Heart left ventricle (tissue), 16 donors: ENCODE measurements at regions of chr19 and their contacts with region 1.

Region 1: DNA sequence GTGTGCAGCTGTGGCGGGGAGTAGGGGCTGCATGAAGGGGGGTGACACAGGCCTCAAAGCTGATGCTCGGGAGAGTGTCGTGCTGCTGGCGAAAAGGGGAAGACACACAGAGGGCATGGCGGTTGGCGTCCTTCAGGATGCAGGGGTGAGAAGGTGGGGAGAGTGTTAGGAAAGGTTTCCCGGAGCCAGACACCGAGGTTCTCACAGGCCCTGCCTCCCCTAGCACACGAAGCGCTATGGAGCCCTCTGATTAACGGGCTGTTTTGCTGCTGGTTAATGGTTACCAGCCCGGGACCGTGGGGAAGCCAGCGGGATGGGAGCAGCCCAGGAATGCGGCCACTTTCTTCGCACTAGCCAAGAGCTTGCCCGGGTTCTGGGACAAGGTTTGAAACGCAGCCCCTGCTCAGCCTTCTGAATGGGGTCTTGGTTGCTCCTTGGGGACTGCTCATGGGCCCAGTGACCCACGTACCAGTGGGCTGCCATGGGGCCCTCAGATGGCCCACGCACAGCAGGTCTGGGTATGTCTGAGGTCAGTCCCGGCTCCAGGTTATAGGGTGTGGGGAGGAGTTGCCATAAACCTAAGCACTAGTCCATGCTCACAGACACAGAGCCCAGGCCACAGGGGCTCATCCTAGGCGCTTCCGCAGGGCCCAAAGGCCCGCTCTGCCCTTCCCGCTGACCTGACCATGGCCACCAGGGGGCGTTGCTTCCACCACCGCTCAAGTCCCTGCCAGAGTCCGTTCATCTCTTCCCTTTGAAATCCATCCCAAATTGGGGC is 31.3 kb upstream of the ISYNA1 start:
- DNase-seq: peak; percentile 58 to 85 (median 67)
- ATAC-seq: peak; percentile 5 to 42 (median 24)
- H3K4me3 ChIP-seq: no peak overlapping the region
- H3K27ac ChIP-seq: peak overlapping the region in 2 of 12 donors; percentile 13 to 43
- H3K4me1 ChIP-seq: peaks cover 13 to 72% (median 61%) of the 10 kb centered on the region in 12 donors
- H3K27me3 ChIP-seq: no peaks in the 10 kb centered on the region
- CTCF ChIP-seq: peak; percentile 61 to 86 (median 77)
- POLR2A ChIP-seq: no peak

Region 2: GRCh38 chr19:18340190-18340989 is 128.9 kb before region 1 on chr19 and contains the start of gene PGPEP1:
- intact Hi-C with region 1: no loop called
- DNase-seq: peak; percentile 65 to 89 (median 88)
- ATAC-seq: peak in 3 of 4 donors; percentile 65 to 90 (median 88)
- H3K4me3 ChIP-seq: peak within 1 kb of the TSS; percentile 69 to 99 (median 95)
- H3K27ac ChIP-seq: peak within 1 kb of the TSS; percentile 61 to 92 (median 86)
- H3K4me1 ChIP-seq: peaks cover 0 to 36% (median 12%) of the 10 kb centered on the region in 12 donors
- H3K27me3 ChIP-seq: no peaks in the 10 kb centered on the region
- CTCF ChIP-seq: no peak
- POLR2A ChIP-seq: peak in 1 of 2 donors; percentile 48
- total RNA-seq, gene PGPEP1: 22.5 to 58.6 (median 44.6) TPM

Region 3: GRCh38 chr19:18408053-18408476 is 61.2 kb before region 1 on chr19:
- intact Hi-C with region 1: no loop called
- DNase-seq: peak in 2 of 5 donors; percentile 41 to 44
- ATAC-seq: peak in 2 of 4 donors; percentile 22 to 30
- H3K4me3 ChIP-seq: no peak overlapping the region
- H3K27ac ChIP-seq: no peak overlapping the region
- H3K4me1 ChIP-seq: peaks cover 0 to 4% (median 0%) of the 10 kb centered on the region in 12 donors
- H3K27me3 ChIP-seq: no peaks in the 10 kb centered on the region
- CTCF ChIP-seq: peak; percentile 16 to 51 (median 40)
- POLR2A ChIP-seq: no peak

Region 4: GRCh38 chr19:18503971-18504885 is 35.0 kb after region 1 on chr19:
- intact Hi-C with region 1: loop called in 8 of 10 experiments (anchors 2 to 5 kb)
- DNase-seq: no peak
- ATAC-seq: no peak
- H3K4me3 ChIP-seq: no peak overlapping the region
- H3K27ac ChIP-seq: peak overlapping the region in 10 of 12 donors; percentile 43 to 93 (median 78)
- H3K4me1 ChIP-seq: peaks cover 63 to 100% (median 98%) of the 10 kb centered on the region in 12 donors
- H3K27me3 ChIP-seq: no peaks in the 10 kb centered on the region
- CTCF ChIP-seq: no peak
- POLR2A ChIP-seq: no peak

Region 5: GRCh38 chr19:18521885-18522624 is 52.8 kb after region 1 on chr19 and contains the start of gene ELL:
- intact Hi-C with region 1: loop called in 5 of 10 experiments (anchors 5 kb)
- DNase-seq: peak; percentile 100
- ATAC-seq: peak; percentile 92 to 96 (median 95)
- H3K4me3 ChIP-seq: peak within 1 kb of the TSS; percentile 77 to 100 (median 96)
- H3K27ac ChIP-seq: peak within 1 kb of the TSS; percentile 64 to 99 (median 95)
- H3K4me1 ChIP-seq: peaks cover 0 to 33% (median 14%) of the 10 kb centered on the region in 12 donors
- H3K27me3 ChIP-seq: no peaks in the 10 kb centered on the region
- CTCF ChIP-seq: peak in 6 of 12 donors; percentile 4 to 57 (median 34)
- POLR2A ChIP-seq: peak; percentile 88 to 90
- total RNA-seq, gene ELL: 5.9 to 17.8 (median 9.1) TPM

Region 6: DNA sequence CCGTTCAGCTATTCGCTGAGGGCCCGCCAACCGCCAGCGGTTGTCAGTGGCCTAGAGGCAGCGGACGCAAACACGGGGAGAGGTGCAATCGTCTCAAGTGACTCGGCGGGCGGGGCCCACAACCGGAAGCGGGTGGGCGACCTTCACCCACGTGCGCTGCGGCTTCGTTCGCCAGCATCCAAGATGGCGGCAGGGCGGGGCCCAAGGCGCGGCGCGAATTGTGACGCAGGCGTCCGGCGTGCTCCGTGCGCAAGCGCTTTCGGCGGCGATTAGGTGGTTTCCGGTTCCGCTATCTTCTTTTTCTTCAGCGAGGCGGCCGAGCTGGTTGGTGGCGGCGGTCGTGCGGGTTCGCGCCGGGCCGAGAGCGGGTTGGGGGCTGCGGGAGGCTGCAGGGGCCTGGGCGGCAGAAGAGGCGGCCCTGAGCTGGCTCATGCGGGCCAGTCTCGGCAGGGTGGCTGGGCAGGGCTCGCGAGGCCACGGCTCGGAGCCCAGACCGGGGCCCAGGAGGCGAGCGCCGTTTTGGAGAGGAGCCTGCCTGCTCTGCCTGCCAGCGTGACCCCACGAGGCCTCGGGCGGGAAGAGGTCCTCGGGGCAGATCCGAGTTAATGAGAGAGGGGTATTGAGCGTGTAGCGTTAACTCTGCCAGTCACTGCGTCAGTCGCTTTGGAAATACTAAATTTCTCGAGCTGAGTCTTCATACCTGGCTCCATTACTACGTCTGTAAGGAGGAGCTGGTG is 102.5 kb after region 1 on chr19 and contains the start of gene UBA52:
- intact Hi-C with region 1: loop called in 6 of 10 experiments (anchors 5 to 10 kb)
- DNase-seq: peak; percentile 97 to 99 (median 98)
- ATAC-seq: peak; percentile 90 to 99 (median 96)
- H3K4me3 ChIP-seq: peak within 1 kb of the TSS; percentile 71 to 100 (median 88)
- H3K27ac ChIP-seq: peak within 1 kb of the TSS; percentile 73 to 97 (median 90)
- H3K4me1 ChIP-seq: peaks cover 8 to 23% (median 17%) of the 10 kb centered on the region in 12 donors
- H3K27me3 ChIP-seq: no peaks in the 10 kb centered on the region
- CTCF ChIP-seq: no peak
- POLR2A ChIP-seq: peak; percentile 35 to 86
- total RNA-seq, gene UBA52: 336 to 944 (median 761) TPM

Region 7: GRCh38 chr19:18683213-18683939 is 214.1 kb after region 1 on chr19 and contains the start of gene CRTC1:
- intact Hi-C with region 1: loop called in 1 of 10 experiments (anchors 10 kb)
- DNase-seq: peak; percentile 91 to 95 (median 92)
- ATAC-seq: peak; percentile 89 to 92 (median 91)
- H3K4me3 ChIP-seq: peak within 1 kb of the TSS; percentile 25 to 75 (median 64)
- H3K27ac ChIP-seq: peak within 1 kb of the TSS in 11 of 12 donors; percentile 77 to 91 (median 86)
- H3K4me1 ChIP-seq: peaks cover 4 to 28% (median 12%) of the 10 kb centered on the region in 12 donors
- H3K27me3 ChIP-seq: no peaks in the 10 kb centered on the region
- CTCF ChIP-seq: peak in 3 of 12 donors; percentile 7 to 19 (median 10)
- POLR2A ChIP-seq: peak in 1 of 2 donors; percentile 71
- total RNA-seq, gene CRTC1: 3.8 to 10.2 (median 8.2) TPM